ENCODE measurements at regions of chr12 and their contacts with region 1.

Region 1: GRCh38 chr12:132986001-132986912 is at the start of gene ZNF26:
- DNase-seq: peak; percentile 70 to 96 (median 88)
- ATAC-seq: peak; percentile 96
- H3K4me3 ChIP-seq: peak within 1 kb of the TSS; percentile 90 to 98
- H3K4me3 Mint-ChIP-seq: peak within 1 kb of the TSS; percentile 93
- H3K27ac ChIP-seq: peak within 1 kb of the TSS; percentile 89 to 93
- H3K27ac Mint-ChIP-seq: peak within 1 kb of the TSS; percentile 94
- H3K4me1 ChIP-seq: peaks cover 18% of the 10 kb centered on the region
- H3K4me1 Mint-ChIP-seq: peaks cover 35% of the 10 kb centered on the region
- H3K27me3 ChIP-seq: no peaks in the 10 kb centered on the region
- H3K27me3 Mint-ChIP-seq: peaks cover 2% of the 10 kb centered on the region
- CTCF ChIP-seq: no peak
- total RNA-seq, gene ZNF26: 44.8 to 45.5 TPM

Region 2: DNA sequence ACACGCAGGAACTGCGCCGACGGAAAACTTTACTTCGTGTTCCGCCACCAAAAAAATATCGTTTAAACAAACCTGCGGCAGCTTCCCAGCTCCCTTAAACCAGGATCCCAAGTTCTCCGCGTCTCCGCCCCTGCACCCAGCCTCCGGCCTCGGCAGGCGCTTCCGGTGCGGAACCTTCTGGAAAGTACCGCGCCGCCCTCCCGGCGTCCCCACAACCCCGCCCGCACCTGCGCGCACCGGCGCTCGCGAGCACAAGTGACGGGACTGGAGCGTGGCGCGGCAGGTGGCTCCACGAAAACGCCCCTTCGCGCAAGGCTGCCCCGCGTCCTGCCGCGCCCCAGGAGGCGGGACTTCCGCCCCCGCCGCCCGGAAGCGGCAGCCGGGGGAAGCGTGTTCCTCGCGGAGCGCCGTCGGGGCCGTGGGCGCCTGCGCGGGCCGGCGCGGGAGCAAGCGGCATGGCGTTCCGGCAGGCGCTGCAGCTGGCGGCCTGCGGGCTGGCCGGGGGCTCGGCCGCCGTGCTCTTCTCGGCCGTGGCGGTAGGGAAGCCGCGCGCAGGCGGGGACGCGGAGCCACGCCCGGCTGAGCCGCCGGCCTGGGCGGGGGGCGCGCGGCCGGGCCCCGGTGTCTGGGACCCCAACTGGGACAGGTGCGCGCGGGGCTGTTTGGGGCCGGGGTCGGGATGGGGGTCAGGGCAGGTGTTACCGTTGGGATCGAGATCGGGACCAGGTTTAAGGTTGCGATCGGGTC is 275.7 kb before region 1 on chr12 and contains the start of gene PGAM5:
- CTCF ChIA-PET with region 1: no interaction called
- POLR2A ChIA-PET with region 1: no interaction called
- intact Hi-C with region 1: loop called in 1 of 2 experiments (anchors 2 kb)
- DNase-seq: peak; percentile 81 to 98 (median 90)
- ATAC-seq: peak; percentile 97
- H3K4me3 ChIP-seq: peak within 1 kb of the TSS; percentile 68 to 69
- H3K4me3 Mint-ChIP-seq: peak within 1 kb of the TSS; percentile 87
- H3K27ac ChIP-seq: peak within 1 kb of the TSS; percentile 75 to 86
- H3K27ac Mint-ChIP-seq: peak within 1 kb of the TSS; percentile 94
- H3K4me1 ChIP-seq: peaks cover 21% of the 10 kb centered on the region
- H3K4me1 Mint-ChIP-seq: peaks cover 21% of the 10 kb centered on the region
- H3K27me3 ChIP-seq: no peaks in the 10 kb centered on the region
- H3K27me3 Mint-ChIP-seq: no peaks in the 10 kb centered on the region
- CTCF ChIP-seq: no peak
- total RNA-seq, gene PGAM5: 14.7 to 15.7 TPM

Region 3: DNA sequence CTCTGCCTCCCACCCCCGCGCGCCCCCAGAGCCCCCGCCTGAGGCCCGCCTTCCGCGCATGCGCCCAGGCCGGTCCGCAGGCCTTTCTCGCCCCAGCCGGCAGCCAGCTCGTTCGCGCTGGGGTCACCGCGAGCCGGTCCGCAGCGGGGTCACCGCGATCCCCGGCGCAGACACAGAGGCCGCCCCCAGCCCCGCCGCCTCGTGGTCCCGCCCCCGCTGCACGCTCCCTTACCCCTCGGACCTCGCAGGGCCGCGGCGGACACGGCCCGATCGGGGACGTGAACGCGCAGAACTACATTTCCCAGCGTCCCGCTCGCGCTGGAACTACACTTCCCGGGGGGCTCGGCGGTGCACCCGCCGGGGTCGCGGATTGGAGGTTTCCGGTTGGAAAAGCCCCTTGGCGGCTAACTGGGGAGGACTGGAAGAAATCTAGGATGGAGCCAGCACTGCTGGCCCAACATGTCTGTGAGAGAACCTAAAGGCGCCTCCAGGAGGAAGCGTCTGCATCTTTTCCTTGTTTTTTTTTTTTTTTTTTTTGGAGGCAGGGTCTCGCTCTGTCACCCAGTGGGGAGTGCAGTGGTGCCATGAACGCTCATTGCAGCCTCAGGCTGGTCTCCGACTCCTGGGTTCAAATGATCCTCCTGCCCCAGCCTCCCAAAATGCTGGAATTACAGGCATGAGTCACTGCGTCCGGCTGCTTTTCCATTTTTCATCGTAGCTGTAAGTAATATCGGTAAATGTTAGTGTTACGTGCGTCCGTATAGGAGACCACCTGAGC is 30.1 kb before region 1 on chr12 and contains the start of gene ZNF605:
- CTCF ChIA-PET with region 1: no interaction called
- POLR2A ChIA-PET with region 1: interaction called, 4 read pairs
- intact Hi-C with region 1: loop called in 1 of 2 experiments (anchors 1 kb)
- DNase-seq: peak; percentile 70 to 95 (median 86)
- ATAC-seq: peak; percentile 93
- H3K4me3 ChIP-seq: peak within 1 kb of the TSS; percentile 94 to 100
- H3K4me3 Mint-ChIP-seq: peak within 1 kb of the TSS; percentile 96
- H3K27ac ChIP-seq: peak within 1 kb of the TSS; percentile 78 to 86
- H3K27ac Mint-ChIP-seq: peak within 1 kb of the TSS; percentile 91
- H3K4me1 ChIP-seq: peaks cover 22% of the 10 kb centered on the region
- H3K4me1 Mint-ChIP-seq: peaks cover 32% of the 10 kb centered on the region
- H3K27me3 ChIP-seq: no peaks in the 10 kb centered on the region
- H3K27me3 Mint-ChIP-seq: no peaks in the 10 kb centered on the region
- CTCF ChIP-seq: no peak
- total RNA-seq, gene ZNF605: 5.0 TPM

Region 4: GRCh38 chr12:132972374-132972773 is 13.9 kb before region 1 on chr12:
- CTCF ChIA-PET with region 1: no interaction called
- POLR2A ChIA-PET with region 1: no interaction called
- intact Hi-C with region 1: no loop called
- DNase-seq: no peak
- ATAC-seq: no peak
- H3K4me3 ChIP-seq: no peak overlapping the region
- H3K4me3 Mint-ChIP-seq: no peak overlapping the region
- H3K27ac ChIP-seq: no peak overlapping the region
- H3K27ac Mint-ChIP-seq: no peak overlapping the region
- H3K4me1 ChIP-seq: no peaks in the 10 kb centered on the region
- H3K4me1 Mint-ChIP-seq: no peaks in the 10 kb centered on the region
- H3K27me3 ChIP-seq: peaks cover 0 to 2% of the 10 kb centered on the region in 2 experiments
- H3K27me3 Mint-ChIP-seq: peaks cover 12% of the 10 kb centered on the region
- CTCF ChIP-seq: no peak

Region 5: DNA sequence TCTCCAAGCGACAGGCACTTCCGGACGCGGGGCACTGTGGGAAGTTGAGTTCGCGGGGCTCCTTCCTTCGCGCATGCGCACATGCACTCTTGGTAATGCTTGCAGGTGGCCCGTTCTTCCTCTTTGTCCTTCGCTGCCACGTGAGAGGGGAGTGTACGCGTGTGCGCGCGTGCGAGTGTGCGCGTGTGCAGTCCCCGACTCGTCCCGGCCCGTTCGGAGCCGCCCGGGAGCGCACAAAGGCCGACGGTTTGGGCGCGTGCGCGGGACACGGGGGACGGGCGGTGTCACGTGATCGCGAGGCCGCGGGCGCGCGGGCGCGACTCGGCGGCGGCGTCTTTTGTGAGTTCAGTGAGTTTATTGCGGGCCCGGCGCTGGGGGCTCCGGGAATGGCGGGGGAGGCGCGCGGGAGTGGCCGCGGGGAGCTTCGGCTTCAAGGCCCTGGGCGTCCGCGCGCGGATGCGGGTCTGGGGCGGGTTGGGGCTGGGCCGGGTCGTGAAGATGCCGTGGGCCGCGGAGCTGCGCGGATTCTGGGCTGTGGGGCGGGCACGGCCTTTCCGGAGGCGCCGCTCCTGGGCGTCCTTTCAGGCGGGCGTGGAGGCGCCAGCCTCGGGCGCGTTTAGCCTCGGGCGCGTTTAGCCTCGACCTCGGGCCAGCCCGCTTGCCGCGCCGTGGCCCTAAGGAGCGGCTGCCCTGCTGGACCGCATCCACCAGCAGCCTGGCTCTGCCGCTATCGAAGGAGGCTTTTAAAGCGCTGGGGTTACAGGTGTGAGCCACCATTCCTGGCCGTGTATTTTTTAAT is 51.1 kb after region 1 on chr12 and contains the start of gene ZNF84:
- CTCF ChIA-PET with region 1: no interaction called
- POLR2A ChIA-PET with region 1: interaction called, 3 read pairs
- intact Hi-C with region 1: loop called (anchors 1 kb)
- DNase-seq: peak; percentile 94 to 99 (median 96)
- ATAC-seq: peak; percentile 97
- H3K4me3 ChIP-seq: peak within 1 kb of the TSS; percentile 62 to 69
- H3K4me3 Mint-ChIP-seq: peak within 1 kb of the TSS; percentile 93
- H3K27ac ChIP-seq: peak within 1 kb of the TSS; percentile 78 to 89
- H3K27ac Mint-ChIP-seq: peak within 1 kb of the TSS; percentile 92
- H3K4me1 ChIP-seq: peaks cover 4% of the 10 kb centered on the region
- H3K4me1 Mint-ChIP-seq: peaks cover 20% of the 10 kb centered on the region
- H3K27me3 ChIP-seq: no peaks in the 10 kb centered on the region
- H3K27me3 Mint-ChIP-seq: no peaks in the 10 kb centered on the region
- CTCF ChIP-seq: no peak
- total RNA-seq, gene ZNF84: 26.8 to 27.2 TPM

Region 6: DNA sequence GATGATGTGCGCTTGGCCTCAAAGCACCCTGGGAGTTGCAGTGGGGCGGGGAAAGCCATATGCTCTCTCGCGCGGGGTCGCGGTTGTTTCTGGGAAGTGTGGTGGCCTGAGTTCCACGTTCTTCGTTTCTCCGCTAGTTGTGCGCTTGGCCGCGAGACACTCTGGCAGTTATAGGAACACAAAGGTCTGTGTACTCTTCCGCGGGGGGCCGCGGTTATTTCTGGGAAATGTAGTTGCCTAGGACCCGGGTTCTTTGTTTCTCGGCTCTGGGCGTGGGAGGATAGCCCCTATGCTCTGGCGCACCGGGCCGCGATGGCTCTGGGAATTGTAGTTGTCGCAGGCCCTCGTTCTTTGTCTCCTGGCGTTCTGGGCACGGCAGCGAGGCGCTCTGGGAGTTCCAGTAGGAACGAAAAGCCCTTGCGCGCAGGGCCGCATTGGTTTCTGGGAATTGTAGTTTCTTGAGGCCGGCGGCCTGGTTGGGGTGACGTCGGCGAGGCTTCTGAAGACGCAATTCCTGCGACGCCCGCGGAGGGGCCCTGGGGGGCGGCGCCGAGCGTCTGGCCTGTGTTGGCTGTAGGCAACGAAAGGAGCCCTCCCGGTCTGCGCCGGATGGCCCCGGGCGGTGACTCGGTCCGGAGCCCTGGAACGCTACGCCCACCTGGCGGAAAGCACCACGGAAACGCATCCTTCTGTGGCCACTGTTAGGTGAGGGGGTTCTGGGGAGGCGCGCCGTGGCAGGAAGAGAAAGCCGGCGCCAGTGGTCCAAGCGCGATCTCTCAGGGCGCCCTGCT is 94.3 kb after region 1 on chr12 and contains the start of gene ZNF140:
- CTCF ChIA-PET with region 1: no interaction called
- POLR2A ChIA-PET with region 1: interaction called, 7 read pairs
- intact Hi-C with region 1: loop called (anchors 1 kb)
- DNase-seq: peak; percentile 87 to 98 (median 94)
- ATAC-seq: peak; percentile 57
- H3K4me3 ChIP-seq: peak within 1 kb of the TSS; percentile 87 to 92
- H3K4me3 Mint-ChIP-seq: no peak within 1 kb of the TSS
- H3K27ac ChIP-seq: peak within 1 kb of the TSS; percentile 98 to 99
- H3K27ac Mint-ChIP-seq: no peak within 1 kb of the TSS
- H3K4me1 ChIP-seq: peaks cover 15% of the 10 kb centered on the region
- H3K4me1 Mint-ChIP-seq: peaks cover 17% of the 10 kb centered on the region
- H3K27me3 ChIP-seq: no peaks in the 10 kb centered on the region
- H3K27me3 Mint-ChIP-seq: no peaks in the 10 kb centered on the region
- CTCF ChIP-seq: peak; percentile 33
- total RNA-seq, gene ZNF140: 9.1 to 9.4 TPM

Region 7: DNA sequence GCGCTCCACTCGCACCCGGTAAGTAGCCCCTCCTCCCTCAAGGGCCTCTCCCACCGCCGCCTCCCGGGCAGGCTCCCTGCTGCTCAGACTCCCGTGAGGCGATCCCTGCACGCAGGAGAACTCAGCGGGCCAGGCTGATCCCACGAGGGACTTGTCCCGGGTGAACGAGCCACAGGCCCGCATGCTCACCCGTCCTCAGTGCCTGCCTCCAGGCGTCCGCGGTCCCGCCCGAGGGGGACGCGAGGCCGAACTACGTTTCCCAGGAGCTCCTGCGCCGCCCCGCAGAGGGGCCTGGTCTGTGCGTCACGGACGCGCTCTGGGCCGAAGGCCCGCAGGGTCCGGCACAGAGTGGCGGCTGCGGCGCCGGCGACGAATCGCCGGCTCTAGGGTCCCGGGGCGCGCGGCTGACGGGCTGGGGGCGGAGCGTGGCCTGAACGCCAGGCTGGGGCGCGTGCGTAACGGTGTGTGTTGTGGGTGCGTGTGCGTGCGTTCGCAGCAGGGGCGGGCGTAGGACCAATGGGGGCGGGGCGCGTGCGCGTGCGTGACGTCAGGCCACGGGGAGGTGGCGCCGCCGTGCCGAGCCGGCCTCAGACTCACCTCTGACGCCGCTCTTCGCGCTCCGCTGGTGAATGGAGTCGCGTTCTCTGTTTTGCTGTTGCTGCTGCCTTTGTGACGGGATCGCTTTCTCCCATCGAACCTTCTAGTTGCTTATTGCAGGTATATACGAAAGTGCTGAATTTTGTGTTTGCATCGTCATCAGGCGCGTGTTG is 144.0 kb after region 1 on chr12 and contains the starts of genes ZNF10 and ZNF891:
- CTCF ChIA-PET with region 1: no interaction called
- POLR2A ChIA-PET with region 1: interaction called, 14 read pairs
- intact Hi-C with region 1: loop called (anchors 1 kb)
- DNase-seq: peak; percentile 95 to 99 (median 97)
- ATAC-seq: peak; percentile 86
- H3K4me3 ChIP-seq: peak within 1 kb of the TSS; percentile 56 to 63
- H3K4me3 Mint-ChIP-seq: peak within 1 kb of the TSS; percentile 87
- H3K27ac ChIP-seq: peak within 1 kb of the TSS; percentile 90 to 94
- H3K27ac Mint-ChIP-seq: peak within 1 kb of the TSS; percentile 98
- H3K4me1 ChIP-seq: peaks cover 8% of the 10 kb centered on the region
- H3K4me1 Mint-ChIP-seq: peaks cover 27% of the 10 kb centered on the region
- H3K27me3 ChIP-seq: no peaks in the 10 kb centered on the region
- H3K27me3 Mint-ChIP-seq: no peaks in the 10 kb centered on the region
- CTCF ChIP-seq: no peak
- total RNA-seq, gene ZNF10: 63.5 to 65.5 TPM
- total RNA-seq, gene ZNF891: 4.5 to 5.2 TPM

Region 8: GRCh38 chr12:133181238-133181959 is 195.1 kb after region 1 on chr12 and contains the start of gene ZNF268:
- CTCF ChIA-PET with region 1: no interaction called
- POLR2A ChIA-PET with region 1: interaction called, 3 read pairs
- intact Hi-C with region 1: loop called (anchors 1 kb)
- DNase-seq: peak; percentile 78 to 93 (median 89)
- ATAC-seq: peak; percentile 92
- H3K4me3 ChIP-seq: peak within 1 kb of the TSS; percentile 73 to 82
- H3K4me3 Mint-ChIP-seq: peak within 1 kb of the TSS; percentile 93
- H3K27ac ChIP-seq: peak within 1 kb of the TSS; percentile 76 to 79
- H3K27ac Mint-ChIP-seq: peak within 1 kb of the TSS; percentile 92
- H3K4me1 ChIP-seq: peaks cover 8% of the 10 kb centered on the region
- H3K4me1 Mint-ChIP-seq: peaks cover 19% of the 10 kb centered on the region
- H3K27me3 ChIP-seq: no peaks in the 10 kb centered on the region
- H3K27me3 Mint-ChIP-seq: no peaks in the 10 kb centered on the region
- CTCF ChIP-seq: peak; percentile 35
- total RNA-seq, gene ZNF268: 23.9 to 24.8 TPM

Measured in CD8-positive, alpha-beta T cell (primary cell).